ENCODE measurements at regions of chr17 and their contacts with region 1.

Region 1: GRCh38 chr17:79810130-79811010 is 13.5 kb upstream of the CBX8 start:
- DNase-seq: peak in 8 of 10 donors; percentile 38 to 95 (median 70)

Region 2: GRCh38 chr17:79839363-79840268 is 29.2 kb after region 1 on chr17 and contains the start of gene CBX4:
- intact Hi-C with region 1: loop called (anchors 2 kb)
- DNase-seq: peak; percentile 88 to 99 (median 96)

Measured in posterior cingulate gyrus (tissue), 11 donors.